Dendritic cell treated with granulocyte-macrophage colony-stimulating factor and Interleukin-4, amounts not matched to agents 40 ng/mL and 50 ng/mL, for 4 days (primary cell): ENCODE measurements at regions of chr10 and their contacts with region 1.

Region 1: DNA sequence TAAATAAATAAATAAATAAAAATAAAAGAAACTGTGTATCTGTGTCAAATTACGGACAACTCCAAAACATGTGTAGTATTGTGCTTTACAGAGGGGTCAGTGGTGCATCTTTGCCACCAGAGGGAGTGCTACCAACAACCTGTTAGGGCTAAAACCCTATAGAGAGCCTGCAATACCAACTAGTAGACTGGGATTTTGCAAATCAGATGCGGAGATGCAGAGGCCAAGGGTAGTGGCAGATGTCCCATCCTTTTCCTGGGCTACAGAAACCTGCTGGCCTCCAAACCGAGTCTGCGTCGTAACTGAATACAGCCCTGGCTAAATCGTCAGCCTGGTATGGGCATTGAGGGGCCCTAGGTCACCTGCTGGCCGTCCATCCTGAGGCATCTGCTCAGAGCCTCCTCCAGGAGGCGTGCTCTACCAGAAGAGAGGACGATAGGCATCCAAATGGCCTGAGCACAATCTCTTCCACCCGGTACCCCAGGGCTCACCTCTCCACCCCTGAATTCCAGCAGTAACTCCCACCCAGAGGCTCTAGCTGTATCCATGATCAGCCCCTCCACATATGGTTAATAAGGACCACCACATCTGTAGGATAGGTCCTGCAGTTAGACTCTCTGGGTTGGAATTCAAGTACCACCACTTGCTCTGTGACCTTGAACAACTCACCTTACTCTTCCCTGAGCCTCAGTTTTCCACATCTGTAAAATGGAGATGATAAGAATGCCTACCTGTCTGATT is 6.2 kb upstream of the RRP12 start:
- H3K4me3 Mint-ChIP-seq: no peak overlapping the region
- H3K27ac Mint-ChIP-seq: peak overlapping the region; percentile 92
- H3K4me1 Mint-ChIP-seq: peaks cover 46% of the 10 kb centered on the region
- H3K27me3 Mint-ChIP-seq: no peaks in the 10 kb centered on the region

Region 2: GRCh38 chr10:97425964-97426775 is 18.8 kb after region 1 on chr10 and contains the start of gene PGAM1:
- intact Hi-C with region 1: loop called (anchors 1 kb)
- H3K4me3 Mint-ChIP-seq: peak within 1 kb of the TSS; percentile 84
- H3K27ac Mint-ChIP-seq: peak within 1 kb of the TSS; percentile 83
- H3K4me1 Mint-ChIP-seq: peaks cover 41% of the 10 kb centered on the region
- H3K27me3 Mint-ChIP-seq: no peaks in the 10 kb centered on the region

Region 3: DNA sequence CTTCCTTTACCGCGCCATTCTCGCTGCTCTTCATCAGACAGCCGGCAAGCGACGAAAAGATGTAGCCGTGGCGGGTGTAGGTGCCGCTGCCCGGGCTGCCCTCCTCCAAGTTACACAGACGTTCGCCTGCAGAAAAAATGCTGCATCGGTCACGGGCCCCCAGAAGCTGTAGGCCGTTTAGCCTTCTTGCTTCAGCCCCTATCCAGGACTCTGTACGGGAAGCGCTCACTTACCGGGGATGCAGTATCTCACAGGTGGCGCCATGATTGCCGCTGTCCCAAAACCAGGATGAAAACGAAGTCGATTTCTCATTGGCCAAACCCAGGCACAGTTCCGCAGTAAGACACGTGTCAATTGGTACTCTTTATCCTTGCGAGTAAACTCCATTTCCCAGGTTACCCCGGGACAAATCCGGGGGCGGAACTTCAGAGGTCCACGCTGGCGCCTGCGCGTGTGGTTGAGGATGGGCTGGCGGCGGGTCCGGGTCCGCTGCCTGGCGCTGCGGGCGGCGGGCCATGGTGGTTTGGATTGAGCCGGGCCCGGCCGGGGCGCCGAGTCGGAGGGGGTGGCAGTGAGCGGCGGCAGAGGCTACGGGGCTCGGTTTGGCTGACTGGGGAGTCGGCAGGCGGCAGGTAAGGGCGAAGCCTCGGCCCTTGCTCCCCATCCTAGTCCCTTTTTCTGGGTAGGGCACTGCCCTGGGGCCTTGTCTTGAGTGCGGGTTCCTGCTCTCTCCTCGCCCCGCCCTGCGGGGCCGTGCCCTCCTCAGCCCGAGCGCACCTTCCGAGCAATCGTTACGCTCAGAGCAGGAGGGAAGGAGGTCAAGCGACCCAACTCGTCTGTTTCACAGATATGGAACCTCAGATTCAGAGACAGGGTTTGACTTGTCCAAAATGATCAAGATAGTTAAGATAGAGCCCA is 38.6 kb after region 1 on chr10 and contains the starts of genes EXOSC1 and ZDHHC16:
- intact Hi-C with region 1: loop called (anchors 1 kb)
- H3K4me3 Mint-ChIP-seq: peak within 1 kb of the TSS; percentile 98
- H3K27ac Mint-ChIP-seq: peak within 1 kb of the TSS; percentile 85
- H3K4me1 Mint-ChIP-seq: peaks cover 34% of the 10 kb centered on the region
- H3K27me3 Mint-ChIP-seq: no peaks in the 10 kb centered on the region